Caco-2 (cell line): ENCODE measurements at regions of chr18 and their contacts with region 1.

Region 1: DNA sequence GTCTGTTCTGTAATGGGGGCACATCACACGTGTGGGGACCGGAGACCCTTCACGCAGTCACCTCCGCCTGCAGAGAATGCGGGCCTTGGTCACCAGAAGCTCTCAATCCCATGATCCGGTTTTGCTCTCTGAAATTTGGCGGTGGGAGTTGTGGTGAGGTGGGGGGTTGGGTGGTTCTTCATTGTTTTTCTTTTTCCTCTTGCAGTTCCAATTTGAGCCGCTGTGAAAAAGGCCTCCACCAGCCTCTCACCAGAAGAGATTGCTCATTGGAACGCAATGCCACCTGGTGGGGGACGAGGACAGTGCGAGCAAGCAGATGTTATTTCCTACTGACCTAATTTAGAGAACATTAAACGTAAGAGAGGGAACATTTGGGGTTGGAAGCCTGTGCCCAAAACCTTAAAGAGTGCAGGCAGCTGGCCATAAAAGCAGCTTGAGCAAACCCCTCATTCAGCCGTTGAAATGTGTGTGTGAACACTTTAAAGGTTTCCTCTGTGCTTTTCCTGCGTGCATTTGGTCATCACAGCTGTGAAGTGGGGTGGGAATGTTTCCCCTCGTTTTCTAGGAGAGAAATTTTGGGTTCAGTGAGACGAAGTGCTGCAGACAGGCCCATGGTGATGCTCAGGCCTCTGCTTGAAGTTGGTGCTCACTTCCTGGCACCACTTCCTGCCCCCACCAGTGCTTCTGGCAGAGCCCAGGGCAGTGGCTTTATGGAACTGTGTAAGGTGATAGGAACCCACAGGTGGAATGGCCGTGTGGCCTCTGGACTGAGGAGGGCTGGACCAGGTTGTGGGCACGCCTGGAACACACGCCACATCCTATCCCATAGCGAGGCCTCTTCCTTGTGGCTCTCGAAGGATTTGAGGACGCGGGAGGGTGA is 61.7 kb downstream of the ZCCHC2 start:
- DNase-seq: peak; percentile 72 to 76
- H3K4me3 ChIP-seq: no peak overlapping the region
- H3K4me3 Mint-ChIP-seq: peak overlapping the region; percentile 48
- H3K27ac Mint-ChIP-seq: no peak overlapping the region
- H3K4me1 ChIP-seq: no peaks in the 10 kb centered on the region
- H3K4me1 Mint-ChIP-seq: peaks cover 7% of the 10 kb centered on the region
- H3K27me3 ChIP-seq: no peaks in the 10 kb centered on the region
- H3K27me3 Mint-ChIP-seq: no peaks in the 10 kb centered on the region
- CTCF ChIP-seq: peak; percentile 81 to 87

Region 2: DNA sequence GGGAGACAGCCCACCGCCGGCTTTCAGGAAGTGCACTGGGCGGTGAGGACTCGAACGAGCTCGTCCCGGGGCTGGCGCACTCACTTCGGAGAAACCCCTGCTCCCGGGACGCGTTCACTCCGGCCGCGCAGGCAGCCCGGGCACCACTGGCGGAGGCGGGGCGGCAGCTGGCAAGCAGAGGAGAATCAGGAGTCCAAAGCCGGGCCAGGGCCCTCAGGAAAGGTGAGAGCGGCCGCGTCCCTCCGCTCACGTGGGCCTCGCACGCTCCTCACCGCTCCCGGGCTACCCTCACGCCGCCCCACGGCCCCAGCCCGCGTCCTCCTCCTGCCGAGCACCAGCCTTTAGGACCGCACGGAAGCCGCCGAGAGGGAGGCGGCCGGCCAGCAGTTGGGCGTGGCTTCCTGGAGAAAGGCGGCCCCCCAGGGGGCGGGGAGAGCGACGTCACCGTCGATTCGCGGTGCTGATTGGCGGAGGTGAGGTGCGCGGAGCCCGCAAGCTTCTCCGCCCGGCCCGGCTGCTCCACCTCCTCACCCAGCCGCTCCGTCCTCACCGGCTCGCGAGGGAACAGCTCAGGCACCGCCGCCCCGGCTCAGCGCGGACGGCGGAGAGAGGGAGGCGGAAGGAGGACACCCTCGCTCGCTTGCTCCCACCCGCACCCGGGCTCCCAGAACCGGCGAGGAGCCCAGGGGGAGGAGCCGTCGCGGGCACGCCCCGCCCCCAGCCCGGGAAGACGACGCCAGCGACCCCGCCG is 61.8 kb before region 1 on chr18 and contains the start of gene ZCCHC2:
- CTCF ChIA-PET with region 1: no interaction called
- POLR2A ChIA-PET with region 1: no interaction called
- intact Hi-C with region 1: loop called (anchors 2 kb)
- DNase-seq: peak; percentile 93 to 95
- H3K4me3 ChIP-seq: peak within 1 kb of the TSS; percentile 69
- H3K4me3 Mint-ChIP-seq: peak within 1 kb of the TSS; percentile 76
- H3K27ac Mint-ChIP-seq: no peak within 1 kb of the TSS
- H3K4me1 ChIP-seq: peaks cover 10% of the 10 kb centered on the region
- H3K4me1 Mint-ChIP-seq: no peaks in the 10 kb centered on the region
- H3K27me3 ChIP-seq: no peaks in the 10 kb centered on the region
- H3K27me3 Mint-ChIP-seq: no peaks in the 10 kb centered on the region
- CTCF ChIP-seq: no peak
- total RNA-seq, gene ZCCHC2: 6.9 and 8.9 TPM in 2 replicates

Region 3: DNA sequence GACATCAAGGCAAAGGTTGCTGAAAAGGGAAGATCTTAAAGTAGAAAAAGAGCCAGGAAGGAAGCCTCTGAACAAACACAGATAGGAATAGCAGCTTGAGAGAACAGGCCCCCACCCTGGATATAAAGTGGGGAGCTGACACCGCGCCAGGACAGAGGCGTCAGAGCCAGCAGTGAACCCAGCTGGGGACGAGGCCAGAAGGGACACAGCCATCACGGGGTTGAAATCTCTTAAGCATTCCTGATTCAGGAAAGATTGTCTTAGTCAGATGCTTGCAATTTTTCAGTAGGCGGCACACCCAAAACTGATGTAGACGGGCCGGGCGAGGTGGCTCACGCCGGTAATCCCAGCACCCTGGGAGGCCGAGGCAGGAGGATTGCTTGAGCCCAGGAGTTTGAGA is 37.1 kb after region 1 on chr18:
- CTCF ChIA-PET with region 1: no interaction called
- POLR2A ChIA-PET with region 1: no interaction called
- intact Hi-C with region 1: no loop called
- DNase-seq: no peak
- H3K4me3 ChIP-seq: no peak overlapping the region
- H3K4me3 Mint-ChIP-seq: no peak overlapping the region
- H3K27ac Mint-ChIP-seq: no peak overlapping the region
- H3K4me1 ChIP-seq: no peaks in the 10 kb centered on the region
- H3K4me1 Mint-ChIP-seq: no peaks in the 10 kb centered on the region
- H3K27me3 ChIP-seq: no peaks in the 10 kb centered on the region
- H3K27me3 Mint-ChIP-seq: no peaks in the 10 kb centered on the region
- CTCF ChIP-seq: no peak

Region 4: GRCh38 chr18:62982600-62983251 is 398.2 kb after region 1 on chr18:
- CTCF ChIA-PET with region 1: no interaction called
- POLR2A ChIA-PET with region 1: no interaction called
- intact Hi-C with region 1: loop called (anchors 5 kb)
- DNase-seq: peak in 1 of 2 experiments; percentile 37
- H3K4me3 ChIP-seq: no peak overlapping the region
- H3K4me3 Mint-ChIP-seq: no peak overlapping the region
- H3K27ac Mint-ChIP-seq: no peak overlapping the region
- H3K4me1 ChIP-seq: no peaks in the 10 kb centered on the region
- H3K4me1 Mint-ChIP-seq: no peaks in the 10 kb centered on the region
- H3K27me3 ChIP-seq: no peaks in the 10 kb centered on the region
- H3K27me3 Mint-ChIP-seq: no peaks in the 10 kb centered on the region
- CTCF ChIP-seq: peak; percentile 29 to 34